B cell (primary cell): ENCODE measurements at regions of chr11 and their contacts with region 1.

Region 1: DNA sequence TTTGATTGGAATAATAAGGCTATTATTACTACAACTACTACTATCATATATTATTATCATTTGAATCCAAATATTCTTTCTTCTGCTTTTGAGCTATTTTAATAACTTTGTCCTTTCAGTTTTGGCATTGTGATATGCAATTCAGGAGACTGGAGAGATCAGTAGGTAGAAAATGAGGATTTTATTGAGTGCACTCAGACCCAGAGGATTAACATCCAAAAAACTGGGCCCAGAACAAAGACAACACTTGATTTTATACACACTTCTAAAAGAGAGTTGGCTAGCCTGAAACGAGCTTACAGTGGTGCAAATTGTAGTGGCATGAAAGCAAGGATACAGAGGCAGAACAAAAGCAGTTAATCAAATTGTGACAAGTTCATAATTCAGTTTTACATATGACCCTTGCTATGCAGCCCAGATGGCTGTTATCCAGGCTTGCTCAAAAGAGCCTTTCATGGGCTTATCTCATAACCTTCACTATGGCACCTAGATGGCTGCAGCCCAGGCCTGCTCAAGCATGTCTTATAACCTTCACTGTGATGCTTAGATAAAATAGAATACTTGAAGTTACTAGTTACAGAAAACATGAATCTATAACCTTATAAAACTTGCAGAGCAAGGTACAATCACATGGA is 796.3 kb upstream of the RAG2 start:
- DNase-seq: peak; percentile 5
- ATAC-seq: no peak
- H3K4me3 ChIP-seq: no peak overlapping the region
- H3K4me3 Mint-ChIP-seq: no peak overlapping the region
- H3K27ac ChIP-seq: no peak overlapping the region
- H3K27ac Mint-ChIP-seq: no peak overlapping the region
- H3K4me1 ChIP-seq: no peaks in the 10 kb centered on the region
- H3K4me1 Mint-ChIP-seq: no peaks in the 10 kb centered on the region
- H3K27me3 ChIP-seq: no peaks in the 10 kb centered on the region
- H3K27me3 Mint-ChIP-seq: no peaks in the 10 kb centered on the region
- CTCF ChIP-seq: no peak

Region 2: DNA sequence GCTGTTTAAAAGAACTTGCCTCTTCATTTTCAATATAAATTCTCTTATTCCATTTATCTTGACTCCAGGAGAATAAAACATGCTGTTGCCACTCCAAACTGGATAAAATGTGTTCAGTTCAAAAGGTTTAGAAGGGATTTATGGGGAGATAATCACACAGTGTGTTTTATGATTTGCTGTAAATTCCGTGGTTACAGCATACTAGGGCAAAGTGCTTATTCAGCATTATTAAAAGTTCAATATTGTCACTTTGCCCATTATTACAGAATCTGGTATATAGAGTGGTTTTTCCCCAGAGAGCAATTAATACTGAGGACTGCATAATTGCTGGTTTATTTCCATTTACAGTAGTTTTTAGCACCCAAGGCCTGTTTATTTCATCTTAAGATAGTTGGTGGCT is 15.4 kb before region 1 on chr11:
- CTCF ChIA-PET with region 1: no interaction called
- POLR2A ChIA-PET with region 1: no interaction called
- intact Hi-C with region 1: no loop called
- DNase-seq: no peak
- ATAC-seq: no peak
- H3K4me3 ChIP-seq: no peak overlapping the region
- H3K4me3 Mint-ChIP-seq: no peak overlapping the region
- H3K27ac ChIP-seq: no peak overlapping the region
- H3K27ac Mint-ChIP-seq: no peak overlapping the region
- H3K4me1 ChIP-seq: no peaks in the 10 kb centered on the region
- H3K4me1 Mint-ChIP-seq: no peaks in the 10 kb centered on the region
- H3K27me3 ChIP-seq: no peaks in the 10 kb centered on the region
- H3K27me3 Mint-ChIP-seq: no peaks in the 10 kb centered on the region
- CTCF ChIP-seq: no peak

Region 3: GRCh38 chr11:37465221-37465620 is 70.9 kb after region 1 on chr11:
- CTCF ChIA-PET with region 1: no interaction called
- POLR2A ChIA-PET with region 1: no interaction called
- intact Hi-C with region 1: loop called (anchors 10 kb)
- DNase-seq: no peak
- ATAC-seq: no peak
- H3K4me3 ChIP-seq: no peak overlapping the region
- H3K4me3 Mint-ChIP-seq: no peak overlapping the region
- H3K27ac ChIP-seq: no peak overlapping the region
- H3K27ac Mint-ChIP-seq: no peak overlapping the region
- H3K4me1 ChIP-seq: no peaks in the 10 kb centered on the region
- H3K4me1 Mint-ChIP-seq: no peaks in the 10 kb centered on the region
- H3K27me3 ChIP-seq: no peaks in the 10 kb centered on the region
- H3K27me3 Mint-ChIP-seq: no peaks in the 10 kb centered on the region
- CTCF ChIP-seq: no peak